HepG2 (cell line): ENCODE measurements at regions of chr1 and their contacts with region 1.

Region 1: GRCh38 chr1:110612065-110612751 is 6.0 kb upstream of the KCNA2 start:
- DNase-seq: no peak
- ATAC-seq: no peak
- H3K4me3 ChIP-seq: no peak overlapping the region
- H3K27ac ChIP-seq: no peak overlapping the region
- H3K4me1 ChIP-seq: no peaks in the 10 kb centered on the region
- H3K27me3 ChIP-seq: peaks cover 5 to 31% of the 10 kb centered on the region in 2 experiments; a peak in 3 of 5 replicates
- CTCF ChIP-seq: no peak
- EP300 ChIP-seq: no peak
- POLR2A ChIP-seq: no peak
- RAD21 ChIP-seq: no peak

Region 2: DNA sequence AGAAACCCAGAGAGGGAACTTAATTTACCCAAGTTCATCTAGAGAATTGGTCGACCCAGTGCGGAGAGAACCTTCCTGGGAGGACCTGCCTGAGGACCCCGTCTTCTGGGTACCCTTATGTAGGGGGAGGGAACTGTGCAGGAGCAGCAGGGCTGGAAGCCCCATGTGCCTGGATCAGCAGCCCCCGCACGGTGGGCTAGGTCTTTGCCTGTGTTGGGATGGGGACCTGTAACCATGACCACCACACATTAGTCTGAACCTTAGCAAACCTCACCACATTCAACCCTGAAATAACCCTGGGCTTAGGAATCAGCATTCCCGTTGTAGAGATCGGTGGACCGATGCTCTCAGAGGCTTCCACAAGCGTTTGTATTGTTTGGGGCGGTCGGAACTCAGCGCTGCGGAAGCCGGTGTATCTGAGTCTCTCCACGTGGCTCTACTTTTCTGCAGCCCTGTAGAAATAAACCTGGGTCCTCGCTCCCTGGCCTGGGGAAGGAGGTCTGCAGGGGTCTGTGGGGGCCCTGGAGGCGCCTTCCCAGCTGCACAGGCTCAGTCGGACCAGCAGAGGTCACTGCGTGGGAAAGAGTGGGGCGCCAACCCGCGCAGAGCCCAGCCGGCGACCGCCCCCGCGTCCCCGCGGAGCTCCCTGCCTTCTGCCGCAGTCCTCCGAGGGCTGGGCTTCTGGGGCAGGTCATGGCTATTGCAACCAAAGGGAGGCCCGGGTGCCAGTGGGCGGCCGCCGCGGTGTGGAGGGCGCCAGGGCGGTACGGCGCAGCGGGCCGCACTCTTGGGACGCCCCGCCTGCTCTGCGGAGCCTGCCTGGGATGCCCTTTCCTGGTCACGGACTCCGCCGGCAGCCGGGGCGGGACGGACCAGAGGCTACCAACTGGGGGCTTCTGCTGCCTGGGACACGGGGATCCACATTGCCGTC is 57.1 kb before region 1 on chr1:
- CTCF ChIA-PET with region 1: interaction called, 15 read pairs
- POLR2A ChIA-PET with region 1: no interaction called
- in situ Hi-C with region 1: loop called (anchors 5 kb)
- intact Hi-C with region 1: loop called (anchors 1 kb)
- DNase-seq: peak; percentile 11
- ATAC-seq: peak; percentile 95
- H3K4me3 ChIP-seq: peak overlapping the region in 2 of 3 experiments; percentile 28 to 61; a peak in 2 of 6 replicates
- H3K27ac ChIP-seq: no peak overlapping the region
- H3K4me1 ChIP-seq: no peaks in the 10 kb centered on the region
- H3K27me3 ChIP-seq: peaks cover 4 to 25% of the 10 kb centered on the region in 2 experiments; a peak in 4 of 5 replicates
- CTCF ChIP-seq: peak; percentile 76
- EP300 ChIP-seq: no peak
- POLR2A ChIP-seq: no peak
- RAD21 ChIP-seq: peak; percentile 63